ENCODE measurements at regions of chr17 and their contacts with region 1.

Region 1: GRCh38 chr17:21613071-21613429 is 79.3 kb upstream of the KCNJ18 start:
- DNase-seq: no peak
- H3K4me3 ChIP-seq: no peak overlapping the region
- H3K27ac ChIP-seq: no peak overlapping the region
- H3K4me1 ChIP-seq: no peaks in the 10 kb centered on the region
- H3K27me3 ChIP-seq: no peaks in the 10 kb centered on the region
- CTCF ChIP-seq: no peak

Region 2: DNA sequence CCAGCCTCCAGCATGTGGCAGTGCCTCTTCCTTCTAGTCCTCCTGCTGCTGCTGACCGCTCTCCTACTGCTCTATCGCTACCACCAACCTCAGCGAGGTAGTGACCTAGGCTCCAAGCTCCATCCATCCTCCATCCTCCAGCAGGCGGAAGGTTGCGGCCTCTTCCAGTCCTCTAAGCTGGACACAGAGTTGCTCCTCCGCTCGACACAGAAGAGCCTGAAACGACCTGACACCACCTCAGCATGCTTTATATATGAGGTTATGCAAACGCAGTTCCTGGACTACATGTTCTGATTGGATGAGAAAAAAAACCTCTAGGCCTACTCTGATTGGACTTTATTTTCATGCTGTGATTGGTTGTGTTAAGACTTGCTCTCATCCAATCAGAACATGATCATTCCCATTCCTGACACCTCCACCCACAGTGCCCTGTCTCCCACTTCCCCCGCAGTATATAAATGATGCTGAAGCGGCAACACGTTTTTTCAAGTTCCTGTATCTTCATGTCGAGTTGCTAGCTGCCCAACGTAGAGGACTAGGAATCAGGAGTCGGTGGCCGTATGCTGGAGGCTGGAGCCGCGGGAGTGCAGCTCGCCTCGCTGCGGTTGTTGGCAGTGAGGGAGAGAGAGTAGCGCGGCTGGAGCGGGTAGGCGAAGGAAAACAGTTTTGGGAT is 477.3 kb after region 1 on chr17:
- CTCF ChIA-PET with region 1: no interaction called
- POLR2A ChIA-PET with region 1: no interaction called
- intact Hi-C with region 1: loop called (anchors 5 kb)
- DNase-seq: no peak
- H3K4me3 ChIP-seq: no peak overlapping the region
- H3K27ac ChIP-seq: no peak overlapping the region
- H3K4me1 ChIP-seq: no peaks in the 10 kb centered on the region
- H3K27me3 ChIP-seq: no peaks in the 10 kb centered on the region
- CTCF ChIP-seq: no peak

Measured in A673 (cell line).